KBM-7 (cell line): ENCODE measurements at regions of chr13 and their contacts with region 1.

Region 1: DNA sequence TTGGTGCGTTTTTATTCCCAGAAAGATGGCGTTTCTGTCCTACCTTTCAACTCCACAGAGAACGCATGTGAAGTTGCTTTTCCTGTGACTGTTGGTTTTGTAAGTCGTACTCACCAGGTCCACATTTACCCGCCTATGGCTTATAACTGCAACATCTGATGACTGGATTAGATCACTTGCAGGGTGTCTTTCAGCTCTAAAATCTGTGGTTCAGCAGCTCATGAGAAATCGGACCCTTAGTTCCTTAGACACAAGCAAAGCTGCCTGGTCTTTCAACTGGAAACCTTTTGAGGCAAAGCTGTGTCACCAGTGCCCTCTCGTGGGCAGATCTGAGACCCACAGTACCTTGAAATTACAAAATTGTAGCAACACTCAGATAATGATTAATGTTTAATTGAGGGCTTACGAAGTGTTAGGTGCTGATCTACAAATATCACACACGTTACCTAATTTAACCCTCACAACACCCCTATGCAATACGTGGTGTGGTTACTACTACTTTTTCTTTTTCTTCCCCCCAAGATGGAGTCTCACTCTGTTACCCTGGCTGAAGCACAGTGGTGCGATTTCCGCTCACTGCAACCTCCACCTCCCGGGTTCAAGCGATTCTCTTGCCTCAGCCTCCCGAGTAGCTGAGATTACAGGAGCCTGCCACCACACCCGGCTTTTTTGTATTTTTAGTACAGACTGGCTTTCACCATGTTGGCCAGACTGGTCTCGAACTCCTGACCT is 65.4 kb downstream of the RUBCNL start:
- DNase-seq: peak; percentile 71

Region 2: GRCh38 chr13:45623515-45624090 is 698.1 kb before region 1 on chr13:
- in situ Hi-C with region 1: loop called (anchors 25 kb)
- DNase-seq: peak; percentile 41

Region 3: GRCh38 chr13:46134961-46135522 is 186.6 kb before region 1 on chr13:
- in situ Hi-C with region 1: no loop called
- DNase-seq: no peak